Activated CD8-positive, alpha-beta T cell treated with anti-CD3 and anti-CD28 coated beads, Interleukin-2, amount 10 ng/mL, durations not matched to agents 7 days and 5 days (primary cell): ENCODE measurements at regions of chr1 and their contacts with region 1.

Region 1: DNA sequence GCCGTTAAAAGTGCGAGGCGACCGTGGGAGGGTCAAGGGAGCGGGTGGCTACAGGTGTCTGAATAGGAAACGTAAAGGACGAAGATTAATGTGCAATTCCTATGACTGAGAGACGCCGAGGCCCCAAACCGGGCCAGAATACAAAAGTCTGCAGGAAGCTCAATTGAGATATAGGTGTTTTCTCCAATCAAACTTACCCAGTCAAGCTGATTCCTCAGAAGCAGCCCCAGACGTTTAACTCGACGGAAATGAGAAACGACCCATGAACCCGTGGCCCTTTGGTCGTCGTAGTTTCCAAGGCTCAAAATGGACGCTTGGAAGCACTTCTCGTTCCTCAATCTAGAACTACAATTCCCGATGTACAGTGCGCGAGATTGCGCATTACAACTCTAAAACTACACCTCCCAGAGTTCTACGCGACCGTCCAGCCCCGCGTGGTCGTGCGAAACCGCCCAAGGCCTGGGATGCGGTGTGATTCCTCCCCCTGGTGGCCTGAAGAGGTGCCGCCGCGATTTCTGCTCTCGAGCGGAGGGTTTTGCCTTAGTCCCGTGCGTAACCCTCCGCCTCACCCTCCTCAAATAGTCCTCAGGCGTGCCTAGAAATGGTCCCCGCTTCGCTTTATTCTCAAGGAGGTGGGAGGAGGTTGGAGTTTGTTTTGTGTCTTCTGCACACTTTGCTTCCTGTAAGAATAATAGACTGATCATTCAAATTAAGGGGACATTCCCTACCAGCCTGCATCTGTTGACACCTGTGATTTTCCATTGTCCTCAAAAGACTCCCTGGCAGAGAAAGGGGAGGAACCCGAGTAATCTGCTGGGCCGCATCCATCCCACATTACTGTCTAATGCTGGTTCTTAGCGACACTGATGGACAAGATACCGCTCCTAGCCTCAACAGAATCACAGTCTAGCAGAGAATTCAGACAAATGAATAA is at the start of gene PAFAH2:
- DNase-seq: peak; percentile 99
- ATAC-seq: peak; percentile 97
- H3K4me3 Mint-ChIP-seq: peak within 1 kb of the TSS; percentile 93
- H3K27ac Mint-ChIP-seq: peak within 1 kb of the TSS; percentile 95
- H3K4me1 Mint-ChIP-seq: peaks cover 30% of the 10 kb centered on the region
- H3K27me3 Mint-ChIP-seq: no peaks in the 10 kb centered on the region
- total RNA-seq, gene PAFAH2: 9.1 to 10.9 TPM

Region 2: GRCh38 chr1:25874934-25875855 is 122.9 kb before region 1 on chr1 and contains the start of gene PAQR7:
- CTCF ChIA-PET with region 1: interaction called, 13 read pairs
- POLR2A ChIA-PET with region 1: no interaction called
- DNase-seq: peak; percentile 64
- ATAC-seq: peak; percentile 93
- H3K4me3 Mint-ChIP-seq: peak within 1 kb of the TSS; percentile 79
- H3K27ac Mint-ChIP-seq: peak within 1 kb of the TSS; percentile 60
- H3K4me1 Mint-ChIP-seq: peaks cover 11% of the 10 kb centered on the region
- H3K27me3 Mint-ChIP-seq: peaks cover 14% of the 10 kb centered on the region
- total RNA-seq, gene PAQR7: 3.2 to 3.3 TPM

Region 3: DNA sequence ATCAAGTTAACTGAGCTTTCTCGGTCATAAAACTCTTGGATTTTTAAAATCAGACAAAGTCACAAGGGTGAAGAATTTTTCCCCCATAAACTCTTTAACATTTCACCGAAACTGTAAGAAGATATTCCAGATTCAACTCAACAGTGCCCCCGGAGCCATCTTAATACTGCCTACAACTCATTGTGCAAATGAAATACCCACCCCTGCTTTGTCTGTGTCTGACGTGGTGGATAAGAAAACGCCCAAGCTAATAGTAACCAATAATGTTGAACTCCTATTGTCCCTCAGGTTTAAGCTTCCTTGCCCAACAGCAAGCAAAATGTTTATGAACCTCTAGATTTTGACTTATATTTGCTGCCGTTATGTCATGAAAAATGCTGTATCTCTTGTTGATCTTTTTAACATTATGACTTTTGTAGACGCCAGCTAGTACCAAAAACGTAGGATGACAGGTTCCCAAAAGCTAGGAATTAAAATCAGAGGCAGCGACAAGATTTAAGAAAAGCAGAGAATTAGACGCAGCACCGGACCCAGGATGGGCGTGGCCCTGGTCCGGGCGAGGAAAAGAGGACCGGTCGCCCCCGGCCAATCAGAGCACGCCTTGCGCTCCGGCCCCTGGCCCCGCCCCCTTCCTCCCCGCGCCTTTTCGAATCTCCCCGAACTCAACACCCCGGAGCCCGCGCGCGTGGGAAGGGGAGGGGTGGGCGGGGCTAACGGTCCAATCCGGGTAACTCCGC is 93.0 kb before region 1 on chr1:
- CTCF ChIA-PET with region 1: interaction called, 610 read pairs
- POLR2A ChIA-PET with region 1: interaction called, 53 read pairs
- DNase-seq: peak; percentile 99
- ATAC-seq: peak; percentile 85
- H3K4me3 Mint-ChIP-seq: peak overlapping the region; percentile 93
- H3K27ac Mint-ChIP-seq: peak overlapping the region; percentile 96
- H3K4me1 Mint-ChIP-seq: peaks cover 46% of the 10 kb centered on the region
- H3K27me3 Mint-ChIP-seq: peaks cover 21% of the 10 kb centered on the region

Region 4: DNA sequence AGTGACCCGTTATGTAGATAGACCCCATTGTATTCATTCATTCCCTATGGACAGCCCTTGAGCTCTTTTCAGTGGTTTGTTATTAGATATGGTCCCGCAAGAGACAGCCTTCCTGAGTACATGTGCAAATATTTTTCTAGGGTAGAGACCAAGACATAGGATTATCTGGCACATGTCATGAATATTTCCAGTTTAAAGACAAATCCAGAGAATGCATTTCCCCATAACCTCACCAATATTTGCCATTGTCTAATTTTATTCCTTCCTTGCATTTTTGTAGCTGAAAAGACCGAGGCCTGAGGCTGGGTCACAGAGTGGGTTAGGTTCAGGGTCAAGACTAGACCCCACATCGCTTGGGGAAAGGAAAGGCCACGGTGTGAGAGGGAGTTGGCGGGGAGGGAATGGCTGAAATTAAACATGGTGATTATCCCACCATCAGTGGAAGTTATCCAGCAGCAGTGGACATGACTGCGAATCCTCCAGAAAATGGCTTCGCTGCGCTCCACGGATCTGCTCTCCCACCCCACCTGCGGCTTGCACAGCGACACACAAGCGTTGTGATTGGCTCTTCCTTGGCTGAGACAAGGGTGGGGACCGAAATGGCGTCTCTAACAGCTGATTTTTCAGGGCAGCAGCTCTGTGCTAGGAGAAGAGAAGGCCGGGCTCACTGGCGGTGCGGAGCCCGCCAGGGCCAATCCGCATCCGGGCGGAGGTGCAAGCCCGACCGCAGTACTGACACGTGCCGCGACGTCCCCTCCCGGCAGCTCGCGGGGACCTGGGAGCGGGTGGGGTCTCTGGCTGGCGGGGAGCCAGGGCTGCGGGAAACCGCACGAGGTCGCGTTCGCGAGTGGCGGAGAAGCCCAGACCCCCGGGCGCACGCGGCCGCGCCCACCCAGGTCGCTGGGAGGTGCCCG is 75.8 kb before region 1 on chr1:
- CTCF ChIA-PET with region 1: interaction called, 18 read pairs
- POLR2A ChIA-PET with region 1: interaction called, 12 read pairs
- DNase-seq: peak; percentile 69
- ATAC-seq: peak; percentile 85
- H3K4me3 Mint-ChIP-seq: peak overlapping the region; percentile 77
- H3K27ac Mint-ChIP-seq: peak overlapping the region; percentile 41
- H3K4me1 Mint-ChIP-seq: peaks cover 41% of the 10 kb centered on the region
- H3K27me3 Mint-ChIP-seq: peaks cover 33% of the 10 kb centered on the region

Region 5: GRCh38 chr1:25977801-25978200 is 20.3 kb before region 1 on chr1:
- CTCF ChIA-PET with region 1: interaction called, 9 read pairs
- POLR2A ChIA-PET with region 1: interaction called, 10 read pairs
- DNase-seq: no peak
- ATAC-seq: no peak
- H3K4me3 Mint-ChIP-seq: no peak overlapping the region
- H3K27ac Mint-ChIP-seq: no peak overlapping the region
- H3K4me1 Mint-ChIP-seq: no peaks in the 10 kb centered on the region
- H3K27me3 Mint-ChIP-seq: no peaks in the 10 kb centered on the region

Region 6: DNA sequence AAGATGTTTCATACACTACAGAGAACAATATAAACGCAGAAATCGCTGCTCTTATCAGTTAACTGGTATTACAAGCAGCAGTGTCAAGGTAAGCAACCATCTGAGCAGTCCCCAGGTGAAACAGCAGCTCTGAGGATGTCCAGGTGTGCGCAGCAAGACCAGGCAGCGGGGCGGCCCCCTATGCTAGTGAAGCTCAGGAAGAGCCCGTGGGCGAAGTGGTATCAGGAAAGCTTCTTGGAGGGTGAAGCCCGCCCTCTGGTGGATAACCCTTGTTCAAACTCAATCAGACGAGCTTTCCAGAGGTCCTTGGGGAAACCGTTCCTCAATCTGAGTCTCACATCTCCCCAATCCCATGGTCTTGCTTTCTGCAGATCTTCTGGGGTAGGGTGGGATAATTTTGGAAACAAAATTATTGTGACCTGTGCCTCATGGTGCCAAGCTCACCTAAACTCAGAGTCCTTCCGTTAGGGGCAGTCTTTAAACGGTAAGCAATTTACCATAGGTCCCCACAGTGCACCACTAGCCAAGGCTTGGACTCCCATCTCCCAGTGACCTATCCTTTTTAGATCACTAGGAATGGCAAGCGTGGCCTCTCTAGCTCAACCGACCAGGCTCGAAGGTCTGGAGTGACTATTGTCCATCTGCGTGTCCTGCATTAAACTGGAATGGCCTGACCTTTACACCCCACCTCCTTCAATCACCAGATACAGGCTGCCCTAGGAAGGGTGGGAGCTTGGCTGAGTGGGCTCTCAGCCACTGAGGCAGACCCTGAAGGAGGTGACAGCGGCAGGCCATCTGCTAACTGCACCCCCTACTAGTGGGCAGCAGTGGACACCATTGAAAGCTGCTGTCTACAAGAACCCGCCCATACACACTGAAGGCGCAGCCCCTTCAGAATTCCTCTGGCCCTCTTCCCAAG is 147.2 kb after region 1 on chr1:
- CTCF ChIA-PET with region 1: interaction called, 11 read pairs
- POLR2A ChIA-PET with region 1: no interaction called
- DNase-seq: peak; percentile 86
- ATAC-seq: peak; percentile 95
- H3K4me3 Mint-ChIP-seq: no peak overlapping the region
- H3K27ac Mint-ChIP-seq: no peak overlapping the region
- H3K4me1 Mint-ChIP-seq: peaks cover 7% of the 10 kb centered on the region
- H3K27me3 Mint-ChIP-seq: peaks cover 23% of the 10 kb centered on the region

Region 7: DNA sequence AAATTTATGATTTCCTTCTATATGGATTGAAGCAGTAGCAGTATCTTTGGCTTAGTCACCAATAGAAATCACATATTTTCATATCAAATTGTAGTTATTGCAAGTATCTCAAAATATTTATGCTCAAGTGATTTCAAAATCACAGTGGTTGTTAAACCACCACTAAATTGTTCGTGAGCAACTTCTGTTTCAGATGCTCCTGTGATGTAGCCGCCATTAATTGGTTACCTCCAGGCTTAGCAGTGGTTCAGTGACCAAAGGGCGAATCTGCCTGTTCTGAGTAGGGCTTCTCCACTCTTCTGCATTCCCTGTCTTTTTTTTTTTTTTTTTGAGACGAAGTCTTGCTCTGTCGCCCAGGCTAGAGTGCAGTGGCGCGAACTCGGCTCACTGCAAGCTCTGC is 177.3 kb after region 1 on chr1:
- CTCF ChIA-PET with region 1: no interaction called
- POLR2A ChIA-PET with region 1: no interaction called
- DNase-seq: no peak
- ATAC-seq: no peak
- H3K4me3 Mint-ChIP-seq: no peak overlapping the region
- H3K27ac Mint-ChIP-seq: no peak overlapping the region
- H3K4me1 Mint-ChIP-seq: peaks cover 12% of the 10 kb centered on the region
- H3K27me3 Mint-ChIP-seq: no peaks in the 10 kb centered on the region